Activated CD4-positive, alpha-beta T cell treated with anti-CD3 and anti-CD28 coated beads, Interleukin-2, amount 10 ng/mL, durations not matched to agents 24 days and 14 days (primary cell): ENCODE measurements at regions of chr3 and their contacts with region 1.

Region 1: DNA sequence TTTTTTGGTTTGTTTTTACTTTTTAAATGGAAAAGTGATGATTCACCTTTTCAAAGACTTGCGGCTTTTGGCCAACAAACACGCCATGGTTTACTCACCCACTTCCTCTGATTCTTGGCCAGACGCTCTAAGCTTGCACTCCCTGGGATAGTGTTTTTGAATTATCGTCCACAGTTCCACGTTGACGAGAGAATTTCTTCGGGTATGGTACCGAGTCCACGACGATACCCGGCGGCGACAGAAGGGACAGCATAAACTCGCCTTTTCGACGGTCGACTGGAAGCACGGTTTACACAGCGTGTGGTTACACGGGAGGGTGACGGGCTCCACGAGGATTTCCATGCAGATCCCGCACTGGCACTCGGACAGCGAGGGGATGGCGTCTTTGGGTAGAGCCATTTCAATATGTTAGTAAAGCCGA is 783 bp downstream of the RNF168 start:
- DNase-seq: peak; percentile 90
- H3K4me3 Mint-ChIP-seq: peak overlapping the region; percentile 98
- H3K27ac Mint-ChIP-seq: peak overlapping the region; percentile 97
- H3K4me1 Mint-ChIP-seq: peaks cover 35% of the 10 kb centered on the region
- H3K27me3 Mint-ChIP-seq: peaks cover 2% of the 10 kb centered on the region

Region 2: GRCh38 chr3:196081791-196082618 is 420.8 kb before region 1 on chr3 and contains the start of gene TFRC:
- intact Hi-C with region 1: loop called (anchors 5 kb)
- DNase-seq: peak; percentile 99
- H3K4me3 Mint-ChIP-seq: peak within 1 kb of the TSS; percentile 89
- H3K27ac Mint-ChIP-seq: peak within 1 kb of the TSS; percentile 92
- H3K4me1 Mint-ChIP-seq: peaks cover 34% of the 10 kb centered on the region
- H3K27me3 Mint-ChIP-seq: no peaks in the 10 kb centered on the region
- total RNA-seq, gene TFRC: 725 and 748 TPM in 2 replicates

Region 3: DNA sequence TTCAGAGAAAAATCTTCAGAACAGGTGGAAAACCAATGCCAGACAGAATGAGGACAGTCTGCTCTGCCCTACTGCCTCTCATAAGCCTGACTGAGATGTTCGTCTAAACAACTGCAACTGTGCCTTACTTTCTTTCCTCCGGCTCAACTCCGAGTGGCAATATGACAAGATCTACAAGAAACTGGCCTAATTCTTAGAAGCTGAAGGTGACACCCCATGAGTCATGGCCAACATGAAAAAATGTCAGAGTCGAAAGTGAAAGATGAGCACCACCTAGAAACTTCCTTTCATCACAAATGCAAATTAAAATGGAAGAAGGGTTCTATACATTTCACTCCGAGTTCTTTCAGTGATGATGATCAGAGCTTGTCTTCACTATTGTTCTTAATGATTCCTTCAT is 228.2 kb before region 1 on chr3:
- intact Hi-C with region 1: loop called (anchors 1 kb)
- DNase-seq: peak; percentile 93
- H3K4me3 Mint-ChIP-seq: peak overlapping the region; percentile 74
- H3K27ac Mint-ChIP-seq: peak overlapping the region; percentile 88
- H3K4me1 Mint-ChIP-seq: peaks cover 54% of the 10 kb centered on the region
- H3K27me3 Mint-ChIP-seq: no peaks in the 10 kb centered on the region

Region 4: GRCh38 chr3:196432137-196432879 is 70.5 kb before region 1 on chr3 and contains the start of gene UBXN7:
- intact Hi-C with region 1: loop called (anchors 1 kb)
- DNase-seq: peak; percentile 98
- H3K4me3 Mint-ChIP-seq: peak within 1 kb of the TSS; percentile 85
- H3K27ac Mint-ChIP-seq: peak within 1 kb of the TSS; percentile 97
- H3K4me1 Mint-ChIP-seq: peaks cover 20% of the 10 kb centered on the region
- H3K27me3 Mint-ChIP-seq: no peaks in the 10 kb centered on the region
- total RNA-seq, gene UBXN7: 65.5 and 70.8 TPM in 2 replicates

Region 5: GRCh38 chr3:196632046-196632751 is 129.4 kb after region 1 on chr3:
- intact Hi-C with region 1: loop called (anchors 2 kb)
- DNase-seq: peak; percentile 97
- H3K4me3 Mint-ChIP-seq: peak overlapping the region; percentile 92
- H3K27ac Mint-ChIP-seq: peak overlapping the region; percentile 97
- H3K4me1 Mint-ChIP-seq: peaks cover 52% of the 10 kb centered on the region
- H3K27me3 Mint-ChIP-seq: no peaks in the 10 kb centered on the region

Region 6: DNA sequence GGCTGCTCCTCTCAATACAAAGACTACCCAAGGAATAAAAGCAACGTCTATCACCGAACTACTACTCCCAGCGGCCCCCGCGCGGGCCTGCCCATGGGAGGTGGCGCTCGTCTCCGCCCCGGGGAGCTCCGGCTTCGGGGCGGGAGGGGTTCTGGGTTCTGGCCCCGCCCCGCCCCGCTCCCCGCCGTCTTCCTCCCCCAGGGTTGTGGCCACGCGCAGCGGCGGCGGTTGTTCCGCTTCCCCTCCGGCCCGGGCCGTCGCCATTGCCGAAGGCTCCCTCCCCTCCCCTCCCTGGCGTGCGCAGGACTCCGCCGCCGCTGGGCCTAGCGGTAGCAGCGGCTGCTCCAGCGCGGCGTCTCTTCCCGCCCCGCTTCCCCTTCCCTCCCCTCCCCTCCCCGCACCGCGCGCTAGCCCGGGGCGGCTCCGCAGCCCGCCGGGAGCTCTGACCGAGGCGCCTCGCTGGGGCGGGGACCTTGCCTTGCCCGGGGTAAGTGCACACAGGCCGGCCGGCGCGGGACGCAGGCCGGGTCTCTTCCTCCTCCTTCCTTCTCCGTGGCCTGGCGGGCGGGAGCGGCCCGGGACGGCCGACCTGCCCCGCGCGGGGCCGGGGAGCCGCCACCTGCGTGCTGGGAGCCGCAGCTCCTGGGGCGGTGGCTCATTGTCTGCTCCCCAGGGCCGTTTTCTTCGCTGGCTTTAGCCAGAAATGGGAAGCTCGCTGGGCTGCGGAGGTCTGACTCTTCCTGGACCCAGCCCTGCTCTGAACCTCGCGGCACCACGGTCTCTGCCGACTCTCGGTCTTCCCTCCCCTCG is 237.1 kb after region 1 on chr3 and contains the start of gene PAK2:
- intact Hi-C with region 1: loop called (anchors 2 kb)
- DNase-seq: peak; percentile 97
- H3K4me3 Mint-ChIP-seq: peak within 1 kb of the TSS; percentile 96
- H3K27ac Mint-ChIP-seq: peak within 1 kb of the TSS; percentile 98
- H3K4me1 Mint-ChIP-seq: peaks cover 22% of the 10 kb centered on the region
- H3K27me3 Mint-ChIP-seq: no peaks in the 10 kb centered on the region
- total RNA-seq, gene PAK2: 81.1 and 92.5 TPM in 2 replicates